PC-9 (cell line): ENCODE measurements at regions of chr2 and their contacts with region 1.

Region 1: GRCh38 chr2:231662028-231662810 is 46.1 kb upstream of the PTMA start:
- DNase-seq: peak; percentile 88 to 98
- H3K4me3 ChIP-seq: peak overlapping the region; percentile 56
- H3K27ac ChIP-seq: peak overlapping the region; percentile 64
- H3K4me1 ChIP-seq: peaks cover 39% of the 10 kb centered on the region
- H3K27me3 ChIP-seq: no peaks in the 10 kb centered on the region
- CTCF ChIP-seq: no peak

Region 2: DNA sequence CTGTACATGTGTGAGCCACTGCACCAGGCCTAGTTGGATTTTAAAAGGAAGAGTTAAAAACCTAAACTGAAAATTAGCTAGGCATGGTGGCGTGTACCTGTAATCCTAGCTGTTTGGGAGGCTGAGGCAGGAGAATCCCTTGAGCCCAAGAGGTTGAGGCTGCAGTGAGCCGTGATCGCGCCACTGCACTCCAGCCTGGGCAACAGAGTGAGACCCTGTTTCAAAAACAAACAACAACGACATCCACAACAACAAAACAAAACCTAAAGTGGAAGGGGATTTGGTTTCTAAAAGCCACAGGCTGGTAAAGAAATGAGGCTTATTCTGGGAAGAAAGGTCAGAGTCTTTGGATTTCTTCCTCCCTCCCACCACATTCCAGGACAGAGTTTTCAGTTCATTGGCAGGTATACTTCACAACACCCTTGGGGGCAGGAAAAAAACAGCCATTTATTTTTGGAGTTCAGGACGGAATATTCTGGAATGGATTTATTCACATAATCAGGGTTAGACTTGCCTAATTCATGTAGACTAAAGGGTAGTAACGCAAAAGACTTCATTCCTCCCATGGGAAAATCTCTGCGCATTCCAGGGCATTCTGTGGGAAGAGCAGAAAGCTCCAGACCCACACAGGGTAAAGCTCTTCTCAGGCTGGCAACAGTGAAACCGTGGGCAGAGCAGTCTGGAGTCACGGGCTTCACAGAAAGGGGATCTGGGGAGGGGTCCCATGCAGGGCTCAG is 34.7 kb before region 1 on chr2:
- CTCF ChIA-PET with region 1: no interaction called
- POLR2A ChIA-PET with region 1: no interaction called
- intact Hi-C with region 1: no loop called
- DNase-seq: no peak
- H3K4me3 ChIP-seq: no peak overlapping the region
- H3K27ac ChIP-seq: no peak overlapping the region
- H3K4me1 ChIP-seq: peaks cover 22% of the 10 kb centered on the region
- H3K27me3 ChIP-seq: no peaks in the 10 kb centered on the region
- CTCF ChIP-seq: no peak

Region 3: GRCh38 chr2:231648587-231649174 is 13.5 kb before region 1 on chr2:
- CTCF ChIA-PET with region 1: interaction called, 11 read pairs
- POLR2A ChIA-PET with region 1: interaction called, 20 read pairs
- intact Hi-C with region 1: no loop called
- DNase-seq: peak; percentile 70 to 89
- H3K4me3 ChIP-seq: no peak overlapping the region
- H3K27ac ChIP-seq: no peak overlapping the region
- H3K4me1 ChIP-seq: peaks cover 35% of the 10 kb centered on the region
- H3K27me3 ChIP-seq: no peaks in the 10 kb centered on the region
- CTCF ChIP-seq: peak; percentile 85